MCF 10A (cell line): ENCODE measurements at regions of chr5 and their contacts with region 1.

Region 1: DNA sequence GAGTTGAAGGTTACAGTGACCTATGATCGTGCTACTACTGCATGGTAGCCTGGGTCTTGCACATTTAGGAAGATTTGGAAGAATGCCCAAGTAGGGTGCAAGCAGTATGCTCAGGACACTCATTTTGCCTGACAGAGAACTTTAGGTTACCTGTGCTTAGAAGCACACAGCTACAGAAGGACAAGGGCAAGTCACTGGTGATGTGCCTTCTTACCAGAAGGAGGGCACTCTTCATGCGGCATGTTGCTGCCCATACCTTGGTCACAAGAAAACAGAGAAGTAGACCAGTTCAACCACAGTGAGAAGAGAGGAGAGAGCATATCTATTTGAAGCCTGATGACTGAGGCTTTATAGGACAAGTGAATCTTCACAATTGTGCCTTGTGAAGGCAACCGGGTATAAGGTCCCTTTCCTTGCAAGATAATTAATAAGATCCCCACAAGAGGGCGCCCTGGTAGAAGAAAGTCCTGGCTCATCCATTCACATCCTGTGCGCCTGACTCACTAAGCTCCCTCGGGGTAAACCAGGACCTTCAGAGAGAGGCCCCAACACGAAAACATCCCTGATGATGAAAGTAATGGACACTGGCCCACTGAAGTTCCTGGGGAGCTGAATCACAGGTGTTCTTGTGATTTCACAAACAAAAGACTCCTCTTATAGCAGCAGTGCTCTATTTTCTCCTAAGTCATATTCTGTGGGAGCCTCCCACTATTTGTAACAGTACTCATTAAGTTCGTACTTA is 38.1 kb upstream of the STARD4 start:
- DNase-seq: peak; percentile 99
- H3K4me3 Mint-ChIP-seq: no peak overlapping the region
- H3K27ac Mint-ChIP-seq: no peak overlapping the region
- H3K4me1 Mint-ChIP-seq: peaks cover 11% of the 10 kb centered on the region
- H3K27me3 Mint-ChIP-seq: no peaks in the 10 kb centered on the region
- CTCF ChIP-seq: peak; percentile 63

Region 2: GRCh38 chr5:111043712-111044506 is 506.5 kb before region 1 on chr5:
- CTCF ChIA-PET with region 1: no interaction called
- POLR2A ChIA-PET with region 1: no interaction called
- intact Hi-C with region 1: no loop called
- DNase-seq: peak; percentile 27
- H3K4me3 Mint-ChIP-seq: no peak overlapping the region
- H3K27ac Mint-ChIP-seq: no peak overlapping the region
- H3K4me1 Mint-ChIP-seq: no peaks in the 10 kb centered on the region
- H3K27me3 Mint-ChIP-seq: no peaks in the 10 kb centered on the region
- CTCF ChIP-seq: no peak

Region 3: GRCh38 chr5:111530298-111530740 is 20.1 kb before region 1 on chr5:
- CTCF ChIA-PET with region 1: interaction called, 16 read pairs
- POLR2A ChIA-PET with region 1: interaction called, 3 read pairs
- intact Hi-C with region 1: no loop called
- DNase-seq: peak; percentile 34
- H3K4me3 Mint-ChIP-seq: peak overlapping the region; percentile 0
- H3K27ac Mint-ChIP-seq: peak overlapping the region; percentile 3
- H3K4me1 Mint-ChIP-seq: peaks cover 8% of the 10 kb centered on the region
- H3K27me3 Mint-ChIP-seq: no peaks in the 10 kb centered on the region
- CTCF ChIP-seq: no peak

Region 4: GRCh38 chr5:111697881-111698757 is 147.7 kb after region 1 on chr5:
- CTCF ChIA-PET with region 1: interaction called, 8 read pairs
- POLR2A ChIA-PET with region 1: interaction called, 10 read pairs
- intact Hi-C with region 1: loop called (anchors 5 kb)
- DNase-seq: peak; percentile 58
- H3K4me3 Mint-ChIP-seq: no peak overlapping the region
- H3K27ac Mint-ChIP-seq: peak overlapping the region; percentile 27
- H3K4me1 Mint-ChIP-seq: peaks cover 51% of the 10 kb centered on the region
- H3K27me3 Mint-ChIP-seq: no peaks in the 10 kb centered on the region
- CTCF ChIP-seq: no peak

Region 5: GRCh38 chr5:111757355-111758283 is 207.2 kb after region 1 on chr5:
- CTCF ChIA-PET with region 1: interaction called, 8 read pairs
- POLR2A ChIA-PET with region 1: interaction called, 5 read pairs
- intact Hi-C with region 1: loop called (anchors 1 kb)
- DNase-seq: peak; percentile 95
- H3K4me3 Mint-ChIP-seq: peak overlapping the region; percentile 79
- H3K27ac Mint-ChIP-seq: no peak overlapping the region
- H3K4me1 Mint-ChIP-seq: peaks cover 10% of the 10 kb centered on the region
- H3K27me3 Mint-ChIP-seq: no peaks in the 10 kb centered on the region
- CTCF ChIP-seq: peak; percentile 33

Region 6: GRCh38 chr5:111859533-111860270 is 309.3 kb after region 1 on chr5:
- CTCF ChIA-PET with region 1: interaction called, 4 read pairs
- POLR2A ChIA-PET with region 1: no interaction called
- intact Hi-C with region 1: loop called (anchors 2 kb)
- DNase-seq: peak; percentile 95
- H3K4me3 Mint-ChIP-seq: no peak overlapping the region
- H3K27ac Mint-ChIP-seq: no peak overlapping the region
- H3K4me1 Mint-ChIP-seq: peaks cover 22% of the 10 kb centered on the region
- H3K27me3 Mint-ChIP-seq: no peaks in the 10 kb centered on the region
- CTCF ChIP-seq: no peak

Region 7: DNA sequence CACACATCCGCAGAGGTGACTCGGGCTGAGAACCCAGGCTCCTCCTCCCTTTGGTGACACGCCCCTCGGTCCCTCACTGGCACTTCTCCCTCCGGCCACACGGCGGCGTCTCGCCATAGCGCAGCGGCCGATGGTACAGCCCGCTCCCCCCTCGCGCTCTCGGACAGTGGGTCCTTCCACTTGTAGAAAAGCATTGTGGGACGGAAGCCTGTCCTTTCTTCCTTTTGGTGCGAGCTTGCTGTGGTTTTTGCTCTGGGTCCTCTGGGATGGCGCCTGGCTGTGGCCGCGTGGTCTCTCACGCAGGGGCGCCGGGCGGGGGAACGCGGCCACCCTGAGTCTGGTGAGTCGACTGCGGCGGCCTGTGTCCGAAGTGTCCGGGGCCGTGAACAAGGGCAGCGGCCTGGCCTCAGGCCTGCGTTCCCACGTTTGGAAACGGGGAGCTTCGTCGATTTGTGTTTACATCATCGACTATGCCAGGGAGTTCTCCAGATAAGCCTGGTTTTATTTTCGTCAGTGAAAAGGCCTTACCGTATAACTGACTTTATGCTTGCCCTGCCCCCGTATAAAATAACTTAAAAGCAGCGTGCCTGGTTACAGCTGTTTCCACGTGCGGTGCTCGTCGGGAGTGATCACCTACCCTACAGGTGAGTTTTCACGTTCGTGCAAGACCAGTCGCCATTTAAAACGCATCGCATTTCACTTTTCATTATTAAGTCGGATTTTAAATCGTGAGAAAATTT is 610.4 kb after region 1 on chr5:
- CTCF ChIA-PET with region 1: no interaction called
- POLR2A ChIA-PET with region 1: interaction called, 3 read pairs
- intact Hi-C with region 1: loop called (anchors 5 kb)
- DNase-seq: peak; percentile 90
- H3K4me3 Mint-ChIP-seq: peak overlapping the region; percentile 95
- H3K27ac Mint-ChIP-seq: peak overlapping the region; percentile 92
- H3K4me1 Mint-ChIP-seq: peaks cover 24% of the 10 kb centered on the region
- H3K27me3 Mint-ChIP-seq: no peaks in the 10 kb centered on the region
- CTCF ChIP-seq: peak; percentile 97